Activated CD8-positive, alpha-beta memory T cell treated with anti-CD3 and anti-CD28 coated beads, Interleukin-2, amount 10 ng/mL, durations not matched to agents 7 days and 5 days (primary cell): ENCODE measurements at regions of chr6 and their contacts with region 1.

Region 1: GRCh38 chr6:4155848-4156466 is 20.6 kb upstream of the ECI2 start:
- DNase-seq: peak; percentile 89
- ATAC-seq: peak; percentile 97
- H3K4me3 Mint-ChIP-seq: no peak overlapping the region
- H3K27ac Mint-ChIP-seq: peak overlapping the region; percentile 7
- H3K4me1 Mint-ChIP-seq: peaks cover 5% of the 10 kb centered on the region
- H3K27me3 Mint-ChIP-seq: peaks cover 11% of the 10 kb centered on the region

Region 2: DNA sequence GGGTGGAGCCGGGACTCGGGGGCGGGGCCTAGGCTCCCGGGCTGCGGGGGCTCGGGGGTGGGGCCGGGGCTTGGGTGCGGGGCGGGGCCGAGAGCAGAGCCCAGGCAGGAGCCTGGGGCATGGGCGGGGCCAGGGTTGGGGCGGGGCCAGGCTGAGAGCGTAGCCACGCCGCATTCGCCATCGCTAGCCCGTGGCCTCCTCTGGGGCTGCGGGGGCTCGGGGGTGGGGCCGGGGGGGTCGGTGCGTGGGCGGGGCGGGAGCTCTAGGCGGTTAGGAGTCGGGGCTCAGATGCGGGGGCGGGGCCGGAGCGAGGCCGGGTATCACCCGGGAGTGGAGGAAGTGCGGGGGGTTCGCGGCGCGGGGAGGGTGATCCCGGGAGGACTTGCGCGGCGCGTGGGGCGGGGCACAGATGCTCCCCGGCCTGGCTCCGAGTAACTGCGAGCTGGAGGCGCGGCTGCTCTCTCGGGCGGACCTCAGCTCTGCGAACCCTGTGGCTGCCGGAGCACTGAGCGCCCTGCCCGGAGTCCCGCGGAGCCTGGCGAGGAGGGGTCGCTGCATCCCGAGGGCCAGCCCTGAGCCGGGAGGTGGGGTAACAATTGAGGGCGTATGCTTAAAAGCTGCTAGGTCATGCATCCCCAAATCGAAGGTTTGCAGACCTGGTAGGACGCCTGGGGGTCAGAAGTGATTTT is 20.1 kb before region 1 on chr6:
- CTCF ChIA-PET with region 1: interaction called, 19 read pairs
- DNase-seq: peak; percentile 97
- ATAC-seq: peak; percentile 90
- H3K4me3 Mint-ChIP-seq: peak overlapping the region; percentile 80
- H3K27ac Mint-ChIP-seq: peak overlapping the region; percentile 84
- H3K4me1 Mint-ChIP-seq: peaks cover 38% of the 10 kb centered on the region
- H3K27me3 Mint-ChIP-seq: no peaks in the 10 kb centered on the region